ENCODE measurements at regions of chr9 and their contacts with region 1.

Region 1: GRCh38 chr9:36142510-36143244 is 6.1 kb downstream of the GLIPR2 start:
- DNase-seq: no peak
- H3K4me3 Mint-ChIP-seq: peak overlapping the region; percentile 85
- H3K27ac Mint-ChIP-seq: peak overlapping the region; percentile 96
- H3K4me1 Mint-ChIP-seq: peaks cover 97% of the 10 kb centered on the region
- H3K27me3 Mint-ChIP-seq: peaks cover 3% of the 10 kb centered on the region

Region 2: DNA sequence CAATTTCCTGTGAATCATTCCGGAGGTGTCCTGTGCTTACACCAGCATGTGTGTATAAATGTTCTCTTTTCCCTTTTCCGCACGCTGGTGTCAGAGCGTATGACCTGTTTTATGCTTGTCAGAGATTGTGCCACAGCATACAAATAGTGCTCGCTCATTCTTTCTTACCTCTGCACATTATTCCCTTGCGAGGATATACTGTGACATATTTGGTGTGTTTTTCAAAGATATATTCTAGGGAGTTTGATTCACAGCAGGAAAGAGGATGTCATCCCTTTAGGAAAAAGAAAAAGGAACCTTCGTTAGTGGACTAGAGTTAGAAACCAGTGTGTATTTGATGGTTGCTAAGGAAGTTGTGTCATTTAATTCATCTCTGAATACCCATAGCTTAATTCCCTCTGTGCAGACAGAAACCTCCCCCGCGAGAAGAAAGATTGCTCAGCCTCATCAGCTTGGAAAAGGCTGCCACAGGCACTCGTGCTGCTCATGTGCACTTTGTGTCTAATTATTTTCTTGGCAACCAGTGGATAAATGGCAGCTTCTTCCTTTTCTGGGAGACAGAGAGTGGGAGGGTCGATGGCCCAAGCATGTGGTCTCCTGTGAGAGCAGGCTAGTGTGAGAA is 11.8 kb after region 1 on chr9:
- CTCF ChIA-PET with region 1: interaction called, 4 read pairs
- POLR2A ChIA-PET with region 1: interaction called, 46 read pairs
- DNase-seq: no peak
- H3K4me3 Mint-ChIP-seq: no peak overlapping the region
- H3K27ac Mint-ChIP-seq: no peak overlapping the region
- H3K4me1 Mint-ChIP-seq: peaks cover 53% of the 10 kb centered on the region
- H3K27me3 Mint-ChIP-seq: no peaks in the 10 kb centered on the region

Region 3: GRCh38 chr9:36161187-36161586 is 18.5 kb after region 1 on chr9:
- CTCF ChIA-PET with region 1: interaction called, 12 read pairs
- POLR2A ChIA-PET with region 1: interaction called, 22 read pairs
- DNase-seq: no peak
- H3K4me3 Mint-ChIP-seq: no peak overlapping the region
- H3K27ac Mint-ChIP-seq: no peak overlapping the region
- H3K4me1 Mint-ChIP-seq: peaks cover 9% of the 10 kb centered on the region
- H3K27me3 Mint-ChIP-seq: no peaks in the 10 kb centered on the region

Region 4: GRCh38 chr9:36174731-36175130 is 32.1 kb after region 1 on chr9:
- CTCF ChIA-PET with region 1: no interaction called
- POLR2A ChIA-PET with region 1: no interaction called
- DNase-seq: no peak
- H3K4me3 Mint-ChIP-seq: no peak overlapping the region
- H3K27ac Mint-ChIP-seq: no peak overlapping the region
- H3K4me1 Mint-ChIP-seq: peaks cover 9% of the 10 kb centered on the region
- H3K27me3 Mint-ChIP-seq: peaks cover 8% of the 10 kb centered on the region